HEK293T (cell line): ENCODE measurements at regions of chr1 and their contacts with region 1.

Region 1: DNA sequence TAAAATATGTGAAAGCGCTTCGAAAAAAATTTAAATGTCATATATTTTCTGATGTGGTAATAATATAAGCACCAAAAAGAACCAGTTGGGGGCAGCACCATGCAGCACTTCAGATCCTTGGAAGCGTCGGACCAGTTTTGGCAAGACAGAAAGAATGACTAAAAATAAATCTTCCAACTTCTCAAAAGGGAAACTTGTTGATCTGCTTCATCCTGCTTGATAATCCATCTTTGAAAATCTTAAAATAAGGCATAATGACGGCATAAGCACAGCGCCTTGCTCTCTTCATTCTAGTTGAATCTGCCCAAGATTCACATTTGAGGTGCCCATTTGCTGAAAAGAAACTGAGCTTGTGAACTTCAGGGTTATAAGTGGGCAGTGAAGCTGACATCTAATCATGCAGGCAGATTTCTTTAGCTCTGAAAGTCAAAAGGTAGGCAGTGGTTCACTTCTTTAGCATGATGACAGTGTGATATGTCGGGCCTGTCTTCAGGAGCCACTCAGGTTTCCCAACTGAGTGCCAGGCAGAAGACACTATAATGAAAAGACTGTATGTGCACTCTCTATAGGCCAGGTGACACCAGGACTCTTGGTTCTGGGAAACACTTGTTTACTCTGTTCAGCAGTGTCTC is 19.8 kb upstream of the MUTYH start:
- DNase-seq: peak; percentile 53

Region 2: GRCh38 chr1:45272983-45273382 is 87.0 kb before region 1 on chr1:
- CTCF ChIA-PET with region 1: no interaction called
- POLR2A ChIA-PET with region 1: no interaction called
- DNase-seq: no peak

Region 3: DNA sequence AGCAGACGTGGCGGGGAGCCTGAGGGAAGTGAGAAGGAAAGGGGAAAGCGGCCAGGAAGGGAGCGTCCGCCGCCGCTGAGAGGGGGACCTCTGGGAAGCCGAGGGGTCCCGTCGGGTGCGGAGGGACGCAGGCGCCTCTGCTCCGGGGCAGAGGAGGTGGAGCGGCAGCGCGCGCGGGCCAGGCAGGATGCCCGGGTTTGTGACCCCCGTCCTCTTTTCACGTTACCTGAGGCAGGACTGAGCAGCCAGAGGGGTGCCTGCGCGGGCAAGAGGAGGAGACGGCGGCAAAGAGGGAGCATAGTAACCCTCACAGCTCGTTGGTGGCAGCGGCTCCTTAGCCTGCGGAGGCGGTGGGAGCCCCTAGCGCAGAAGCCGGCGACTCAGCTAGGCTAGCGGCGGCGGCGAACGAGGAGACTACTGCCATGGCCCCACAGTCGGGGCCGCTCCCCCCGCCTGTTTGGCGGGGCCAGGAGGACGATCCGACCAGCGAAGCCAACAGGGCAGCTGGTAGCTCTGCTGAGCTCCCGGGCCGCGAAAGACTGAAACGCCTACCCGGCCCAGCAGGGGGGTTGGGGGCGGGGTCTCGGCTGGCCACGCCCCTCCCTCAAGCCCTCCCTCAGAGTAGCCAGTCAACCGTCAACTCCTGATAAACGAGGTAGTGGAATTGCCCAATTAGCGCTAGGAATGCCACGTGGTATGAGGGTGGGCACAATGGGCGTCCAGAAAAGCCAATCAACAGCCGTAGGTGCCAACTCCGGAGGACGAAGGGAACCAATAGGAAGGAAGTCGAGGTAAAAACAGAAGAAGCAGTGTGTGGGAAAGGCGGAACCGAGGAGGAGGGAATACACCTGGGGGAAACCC is 130.9 kb after region 1 on chr1 and contains the start of gene TESK2:
- CTCF ChIA-PET with region 1: interaction called, 38 read pairs
- POLR2A ChIA-PET with region 1: interaction called, 3 read pairs
- DNase-seq: peak; percentile 94

Region 4: DNA sequence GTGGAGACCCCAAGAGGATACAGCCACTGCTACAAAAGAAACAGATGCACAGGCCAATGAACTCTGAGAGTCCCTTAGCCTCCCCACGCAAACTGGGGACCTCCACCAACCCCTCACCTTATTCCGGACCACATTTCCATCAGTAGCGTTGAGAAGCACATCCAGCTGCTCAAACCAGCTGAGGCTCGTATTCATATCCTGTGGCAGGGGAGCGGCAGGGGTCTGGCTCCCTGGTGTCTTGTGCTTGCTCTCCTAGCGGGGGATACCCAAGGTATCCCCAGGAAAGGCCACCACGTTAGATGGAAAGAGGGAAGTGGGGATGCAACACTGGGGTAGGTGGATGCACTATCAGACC is 139.4 kb after region 1 on chr1:
- CTCF ChIA-PET with region 1: interaction called, 8 read pairs
- POLR2A ChIA-PET with region 1: interaction called, 10 read pairs
- DNase-seq: no peak